ENCODE measurements at regions of chr3 and their contacts with region 1.

Region 1: DNA sequence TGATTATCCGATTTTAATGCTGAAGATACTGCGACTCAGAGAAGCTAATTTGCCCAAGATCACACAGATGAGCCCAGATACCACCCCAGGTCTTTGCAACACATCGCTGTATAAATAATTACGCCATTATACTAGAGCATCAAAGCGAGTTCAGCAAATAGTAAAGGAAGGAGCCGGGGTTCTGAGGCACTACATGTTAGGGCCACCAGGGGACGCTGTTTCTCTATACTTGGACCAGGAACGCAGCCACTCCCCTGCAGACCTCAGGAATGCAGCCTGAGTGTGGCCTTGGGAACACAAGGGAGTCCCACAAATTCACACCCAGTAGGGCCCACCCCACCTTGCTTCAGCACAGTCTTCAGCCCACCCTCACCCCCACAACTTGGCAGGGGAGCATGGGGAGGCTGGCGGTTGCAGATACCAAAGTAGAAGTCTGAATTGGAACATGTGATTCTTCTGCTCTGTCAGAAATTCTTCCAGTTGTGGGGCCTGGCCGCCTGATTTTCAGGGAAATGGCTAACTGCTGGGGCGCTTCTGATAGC is 57.8 kb upstream of the RYK start:
- DNase-seq: peak; percentile 86
- ATAC-seq: peak; percentile 75
- H3K4me3 ChIP-seq: peak overlapping the region; percentile 67
- H3K27ac ChIP-seq: no peak overlapping the region
- H3K4me1 ChIP-seq: peaks cover 38% of the 10 kb centered on the region
- H3K27me3 ChIP-seq: no peaks in the 10 kb centered on the region
- CTCF ChIP-seq: peak; percentile 92

Region 2: DNA sequence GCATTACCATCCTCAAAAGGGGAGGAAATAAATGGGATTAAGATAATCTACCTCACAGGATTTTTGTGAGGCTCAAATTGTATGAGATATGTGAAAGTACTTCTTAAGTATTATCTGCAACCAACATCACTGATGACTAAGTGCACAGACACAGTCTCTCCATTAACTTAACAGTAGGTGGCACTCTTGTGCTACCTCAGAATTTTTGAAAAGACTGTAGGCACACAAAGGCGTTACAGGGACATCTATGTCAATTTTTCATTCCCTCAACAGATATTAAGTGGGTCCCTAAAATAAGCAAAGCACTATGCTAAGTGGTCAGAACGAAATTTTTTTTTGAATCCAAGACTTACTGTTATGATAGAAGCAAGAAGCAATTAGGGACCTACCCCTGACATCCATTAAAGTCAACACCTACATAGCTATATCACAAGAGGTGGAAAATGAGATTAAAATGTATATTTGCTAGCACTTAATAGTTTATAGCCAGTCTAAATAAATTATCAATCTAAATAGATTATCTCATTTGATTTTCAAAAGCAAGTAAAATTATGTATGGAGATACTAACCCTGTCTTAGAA is 110.7 kb before region 1 on chr3:
- CTCF ChIA-PET with region 1: no interaction called
- POLR2A ChIA-PET with region 1: no interaction called
- intact Hi-C with region 1: loop called (anchors 5 kb)
- DNase-seq: peak; percentile 72
- ATAC-seq: peak; percentile 48
- H3K4me3 ChIP-seq: no peak overlapping the region
- H3K27ac ChIP-seq: no peak overlapping the region
- H3K4me1 ChIP-seq: peaks cover 20% of the 10 kb centered on the region
- H3K27me3 ChIP-seq: no peaks in the 10 kb centered on the region
- CTCF ChIP-seq: peak; percentile 77

Region 3: DNA sequence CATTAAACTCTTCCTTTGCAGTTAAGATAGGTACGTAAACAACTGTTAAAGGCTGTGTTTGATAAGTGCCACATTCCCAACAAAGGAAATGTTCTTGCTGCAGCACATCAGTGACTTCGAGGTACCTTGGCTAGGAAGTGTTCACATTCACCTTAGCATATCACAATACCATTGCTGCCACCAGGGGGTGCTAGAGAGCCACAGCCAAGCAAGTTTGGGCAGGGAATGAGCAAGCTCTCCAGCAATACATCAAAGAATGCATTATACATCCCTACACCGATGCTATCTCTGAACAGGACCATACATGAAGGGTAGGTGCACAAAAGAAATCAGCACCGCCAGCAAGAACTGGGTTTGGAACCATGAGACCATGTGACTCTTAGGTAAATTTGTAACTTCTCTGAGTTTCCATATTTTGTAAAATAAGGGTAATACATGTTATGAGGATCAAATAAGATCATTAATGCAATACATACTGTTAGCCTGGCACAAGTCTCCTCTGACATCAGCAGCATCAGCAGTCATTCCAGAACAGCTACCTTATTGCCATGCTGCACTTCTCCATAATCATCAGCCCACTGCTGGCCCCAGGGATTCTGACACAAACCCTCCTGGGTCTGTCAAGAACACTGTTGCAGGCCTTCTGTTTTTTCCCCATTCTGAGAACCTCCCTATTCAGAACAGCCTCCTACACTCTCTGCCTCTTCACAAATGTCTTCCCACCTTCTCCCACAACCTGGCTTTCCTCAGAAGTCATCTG is 95.3 kb before region 1 on chr3:
- CTCF ChIA-PET with region 1: no interaction called
- POLR2A ChIA-PET with region 1: no interaction called
- intact Hi-C with region 1: no loop called
- DNase-seq: peak; percentile 86
- ATAC-seq: peak; percentile 96
- H3K4me3 ChIP-seq: no peak overlapping the region
- H3K27ac ChIP-seq: no peak overlapping the region
- H3K4me1 ChIP-seq: no peaks in the 10 kb centered on the region
- H3K27me3 ChIP-seq: no peaks in the 10 kb centered on the region
- CTCF ChIP-seq: peak; percentile 87

Region 4: GRCh38 chr3:134357261-134358184 is 49.1 kb after region 1 on chr3:
- CTCF ChIA-PET with region 1: no interaction called
- POLR2A ChIA-PET with region 1: no interaction called
- intact Hi-C with region 1: loop called (anchors 1 kb)
- DNase-seq: peak; percentile 91
- ATAC-seq: peak; percentile 88
- H3K4me3 ChIP-seq: no peak overlapping the region
- H3K27ac ChIP-seq: peak overlapping the region; percentile 76
- H3K4me1 ChIP-seq: peaks cover 47% of the 10 kb centered on the region
- H3K27me3 ChIP-seq: no peaks in the 10 kb centered on the region
- CTCF ChIP-seq: no peak

Region 5: DNA sequence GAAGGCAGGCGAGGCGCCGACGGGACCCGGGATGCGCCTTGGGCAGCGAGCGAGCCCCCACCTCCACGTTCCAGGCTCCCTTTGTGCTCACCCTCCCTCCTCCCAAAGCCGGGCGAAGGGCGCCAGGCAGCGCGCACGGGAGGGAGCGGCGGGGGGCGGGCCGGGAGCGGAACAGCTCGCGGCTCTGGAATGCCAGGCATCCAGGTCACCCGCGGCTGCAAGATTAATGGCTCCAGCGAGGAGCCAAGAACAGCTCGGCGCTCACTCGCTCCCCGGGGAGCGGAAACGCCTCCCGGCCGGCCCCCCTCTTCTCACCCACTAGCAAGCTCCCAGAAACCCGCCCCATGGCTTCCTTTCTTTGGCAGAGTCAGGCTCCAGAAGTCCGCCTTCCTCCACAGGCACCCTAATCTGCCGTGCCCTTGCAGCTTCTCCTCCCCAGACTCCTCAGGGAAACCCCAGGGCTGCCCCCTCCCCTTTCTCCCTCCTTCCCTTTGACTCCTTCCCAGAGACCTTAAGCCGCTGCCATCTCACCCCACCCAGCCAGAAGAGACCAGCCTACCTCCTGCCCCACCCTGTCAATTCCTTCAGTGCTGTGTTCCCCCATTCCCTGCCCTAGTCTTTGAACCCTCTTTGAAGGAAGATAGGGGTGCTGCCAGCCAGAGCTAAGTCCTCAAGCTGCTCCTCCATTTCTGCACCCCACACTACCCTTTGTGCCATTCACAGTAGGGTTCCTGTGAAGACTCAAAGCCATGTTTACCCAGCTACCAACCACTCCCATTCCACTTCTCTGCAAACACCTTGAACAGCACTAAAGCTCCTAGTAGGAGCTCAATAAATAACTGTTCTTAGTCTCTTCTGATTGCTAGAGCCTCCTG is 55.9 kb after region 1 on chr3:
- CTCF ChIA-PET with region 1: no interaction called
- POLR2A ChIA-PET with region 1: interaction called, 7 read pairs
- intact Hi-C with region 1: loop called (anchors 2 kb)
- DNase-seq: peak; percentile 94
- ATAC-seq: peak; percentile 82
- H3K4me3 ChIP-seq: peak overlapping the region; percentile 43
- H3K27ac ChIP-seq: peak overlapping the region; percentile 68
- H3K4me1 ChIP-seq: peaks cover 43% of the 10 kb centered on the region
- H3K27me3 ChIP-seq: no peaks in the 10 kb centered on the region
- CTCF ChIP-seq: no peak

Region 6: DNA sequence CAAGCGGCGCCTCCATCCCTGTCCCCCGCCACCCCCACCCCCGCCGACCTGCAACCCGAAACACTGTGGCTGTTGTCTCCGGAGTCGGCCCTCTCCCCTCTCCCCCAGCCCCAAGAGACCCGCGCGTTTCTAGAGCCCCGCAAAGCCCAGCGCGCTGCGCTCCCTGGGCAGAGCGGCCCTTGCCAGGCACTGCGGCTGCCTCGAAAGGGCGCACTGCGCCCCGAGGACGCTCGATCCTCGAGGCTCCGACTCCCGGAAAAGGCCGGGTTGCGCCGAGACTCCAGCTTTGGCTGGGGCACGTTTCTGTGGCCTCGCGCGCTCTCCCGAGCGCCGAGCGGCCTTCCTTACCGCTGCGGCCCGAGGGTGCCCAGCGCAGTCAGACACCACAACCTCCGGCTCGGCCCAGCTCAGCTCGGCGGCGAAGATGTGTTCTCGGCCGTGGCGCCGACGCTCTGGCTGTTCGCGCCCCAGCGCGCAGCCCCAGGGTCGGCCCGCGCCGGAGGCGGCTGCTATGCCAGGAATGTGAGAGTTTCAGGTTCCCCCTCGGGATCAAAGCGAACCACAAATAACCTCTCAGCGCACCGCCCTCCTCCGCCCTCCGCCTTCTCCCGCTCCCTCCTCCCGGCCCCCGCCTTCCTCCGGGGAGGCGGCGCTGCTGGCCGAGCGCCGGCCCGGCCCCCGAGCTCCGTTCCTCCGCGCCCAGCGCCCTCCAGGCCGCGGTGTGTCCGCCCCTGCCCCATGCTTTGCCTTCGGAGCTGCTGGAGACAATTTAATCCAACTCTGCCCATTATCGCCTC is 65.8 kb after region 1 on chr3 and contains the start of gene AMOTL2:
- CTCF ChIA-PET with region 1: interaction called, 3 read pairs
- POLR2A ChIA-PET with region 1: interaction called, 3 read pairs
- intact Hi-C with region 1: loop called (anchors 1 kb)
- DNase-seq: peak; percentile 90
- ATAC-seq: peak; percentile 69
- H3K4me3 ChIP-seq: peak within 1 kb of the TSS; percentile 98
- H3K27ac ChIP-seq: peak within 1 kb of the TSS; percentile 89
- H3K4me1 ChIP-seq: peaks cover 61% of the 10 kb centered on the region
- H3K27me3 ChIP-seq: no peaks in the 10 kb centered on the region
- CTCF ChIP-seq: no peak
- total RNA-seq, gene AMOTL2: 96.0 and 124 TPM in 2 replicates

Region 7: DNA sequence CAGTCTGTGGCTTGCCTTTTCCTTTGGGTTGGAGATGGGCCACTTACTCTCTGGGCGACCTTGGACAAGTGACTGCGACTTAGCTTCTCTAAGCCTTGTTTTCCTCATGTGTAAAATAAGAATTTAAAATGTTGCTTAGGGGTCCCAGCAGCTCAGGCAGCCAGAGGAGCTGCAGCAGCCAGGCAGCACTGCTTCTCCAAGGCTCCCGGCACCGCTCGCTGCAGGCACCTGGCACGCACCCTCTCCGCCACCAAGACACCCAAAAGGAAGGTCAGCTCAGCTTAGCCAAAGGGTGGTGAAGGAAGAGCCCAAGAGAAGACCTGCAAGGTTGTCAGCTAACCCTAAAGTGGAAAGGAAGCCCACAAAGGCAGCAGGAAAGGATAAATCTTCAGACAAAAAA is 76.5 kb after region 1 on chr3:
- CTCF ChIA-PET with region 1: no interaction called
- POLR2A ChIA-PET with region 1: no interaction called
- intact Hi-C with region 1: no loop called
- DNase-seq: no peak
- ATAC-seq: no peak
- H3K4me3 ChIP-seq: no peak overlapping the region
- H3K27ac ChIP-seq: no peak overlapping the region
- H3K4me1 ChIP-seq: peaks cover 18% of the 10 kb centered on the region
- H3K27me3 ChIP-seq: no peaks in the 10 kb centered on the region
- CTCF ChIP-seq: no peak

Measured in PC-3 (cell line).